HEK293 (cell line): ENCODE measurements at regions of chr21 and their contacts with region 1.

Region 1: GRCh38 chr21:20999659-21000058 is 1.4 kb downstream of the NCAM2 start:
- H3K4me3 ChIP-seq: no peak overlapping the region
- H3K27ac ChIP-seq: no peak overlapping the region
- H3K4me1 ChIP-seq: no peaks in the 10 kb centered on the region
- CTCF ChIP-seq: no peak

Region 2: DNA sequence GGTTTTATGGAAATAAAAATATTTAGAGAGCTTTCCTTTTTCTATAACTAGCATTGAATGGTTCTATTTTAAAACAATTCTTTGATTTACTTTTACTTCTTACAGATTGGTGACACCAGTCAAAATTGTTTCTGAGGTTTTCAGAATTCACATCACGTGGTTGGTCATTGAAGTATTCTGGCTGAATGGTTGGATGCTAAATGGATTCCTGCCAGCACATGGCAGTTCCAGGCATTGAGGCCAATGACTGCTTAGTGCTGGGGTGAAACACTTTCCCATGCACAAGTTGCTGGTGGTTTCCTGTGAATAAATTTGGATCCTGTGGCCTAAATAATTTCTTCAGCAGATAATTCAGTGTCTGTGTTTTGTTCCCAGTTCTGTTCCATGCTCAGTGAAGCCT is 19.2 kb after region 1 on chr21:
- CTCF ChIA-PET with region 1: interaction called, 11 read pairs
- POLR2A ChIA-PET with region 1: no interaction called
- H3K4me3 ChIP-seq: no peak overlapping the region
- H3K27ac ChIP-seq: no peak overlapping the region
- H3K4me1 ChIP-seq: no peaks in the 10 kb centered on the region
- CTCF ChIP-seq: no peak

Region 3: GRCh38 chr21:21101911-21102310 is 102.3 kb after region 1 on chr21:
- CTCF ChIA-PET with region 1: interaction called, 30 read pairs
- POLR2A ChIA-PET with region 1: no interaction called
- H3K4me3 ChIP-seq: no peak overlapping the region
- H3K27ac ChIP-seq: no peak overlapping the region
- H3K4me1 ChIP-seq: no peaks in the 10 kb centered on the region
- CTCF ChIP-seq: no peak